ENCODE measurements at regions of chr9 and their contacts with region 1.

Region 1: GRCh38 chr9:109182940-109183798 is 16.1 kb upstream of the FRRS1L start:
- DNase-seq: peak; percentile 68
- H3K4me3 Mint-ChIP-seq: no peak overlapping the region
- H3K27ac Mint-ChIP-seq: no peak overlapping the region
- H3K4me1 Mint-ChIP-seq: peaks cover 13% of the 10 kb centered on the region
- H3K27me3 Mint-ChIP-seq: peaks cover 28% of the 10 kb centered on the region

Region 2: GRCh38 chr9:109110326-109111021 is 72.7 kb before region 1 on chr9:
- intact Hi-C with region 1: loop called (anchors 2 kb)
- DNase-seq: no peak
- H3K4me3 Mint-ChIP-seq: peak overlapping the region; percentile 66
- H3K27ac Mint-ChIP-seq: peak overlapping the region; percentile 87
- H3K4me1 Mint-ChIP-seq: peaks cover 54% of the 10 kb centered on the region
- H3K27me3 Mint-ChIP-seq: no peaks in the 10 kb centered on the region

Region 3: DNA sequence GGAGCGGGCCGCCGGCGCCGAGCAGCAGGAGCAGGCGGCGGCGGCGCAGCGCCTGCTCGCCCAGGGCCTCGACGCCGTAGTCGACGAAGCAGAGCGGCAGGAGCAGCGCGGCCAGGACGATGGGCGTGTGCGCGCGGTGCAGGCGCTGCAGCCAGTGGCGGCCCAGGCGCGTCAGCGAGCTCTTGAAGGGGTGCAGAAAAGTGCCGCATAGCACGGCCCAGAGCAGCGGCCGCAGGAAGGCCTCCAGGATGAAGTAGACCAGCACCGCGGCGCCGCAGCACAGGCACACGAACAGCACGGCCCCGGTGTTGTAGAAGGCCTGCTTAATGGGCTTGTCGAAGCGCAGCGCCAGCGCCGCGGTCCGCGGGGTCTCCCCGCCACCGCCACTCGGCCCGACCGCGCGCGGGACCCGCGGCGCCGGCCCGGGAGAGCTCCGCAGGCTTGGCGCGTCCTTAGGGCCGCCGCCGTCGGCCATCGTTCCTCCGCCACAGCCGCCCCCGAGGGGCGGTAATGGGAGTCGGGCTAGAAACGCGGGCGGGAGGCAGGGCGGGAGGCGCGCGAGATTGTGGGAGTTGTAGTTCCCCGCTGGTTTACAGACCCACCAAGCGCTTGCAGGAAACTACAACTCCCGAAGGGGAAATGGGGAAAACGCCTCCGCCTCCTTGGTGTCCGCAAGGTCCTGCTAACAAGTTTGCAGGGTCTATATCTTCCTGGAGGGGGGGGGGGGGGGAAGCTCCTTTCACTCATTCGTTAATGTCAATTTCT is 63.5 kb before region 1 on chr9 and contains the start of gene TMEM245:
- intact Hi-C with region 1: loop called (anchors 1 kb)
- DNase-seq: peak; percentile 98
- H3K4me3 Mint-ChIP-seq: peak within 1 kb of the TSS; percentile 90
- H3K27ac Mint-ChIP-seq: peak within 1 kb of the TSS; percentile 94
- H3K4me1 Mint-ChIP-seq: peaks cover 38% of the 10 kb centered on the region
- H3K27me3 Mint-ChIP-seq: no peaks in the 10 kb centered on the region
- total RNA-seq, gene TMEM245: 26.7 and 27.0 TPM in 2 replicates

Region 4: GRCh38 chr9:109232449-109233237 is 49.5 kb after region 1 on chr9:
- intact Hi-C with region 1: no loop called
- DNase-seq: no peak
- H3K4me3 Mint-ChIP-seq: no peak overlapping the region
- H3K27ac Mint-ChIP-seq: no peak overlapping the region
- H3K4me1 Mint-ChIP-seq: no peaks in the 10 kb centered on the region
- H3K27me3 Mint-ChIP-seq: peaks cover 34% of the 10 kb centered on the region